WTC11 (cell line): ENCODE measurements at regions of chr16 and their contacts with region 1.

Region 1: GRCh38 chr16:75495076-75495674 is at the start of gene CHST6:
- DNase-seq: peak; percentile 82
- ATAC-seq: peak; percentile 85
- H3K4me3 Mint-ChIP-seq: peak within 1 kb of the TSS; percentile 93
- H3K27ac Mint-ChIP-seq: 0 out of 2 replicates have a peak within 1 kb of the TSS, but pooled peaks have one; percentile 76
- H3K4me1 Mint-ChIP-seq: peaks cover 19% of the 10 kb centered on the region
- H3K27me3 Mint-ChIP-seq: peaks cover 13% of the 10 kb centered on the region
- CTCF ChIP-seq: no peak
- total RNA-seq, gene CHST6: 20.2 to 23.2 TPM (median 23.1 TPM) in 3 replicates

Region 2: GRCh38 chr16:75064403-75065148 is 430.6 kb before region 1 on chr16:
- CTCF ChIA-PET with region 1: no interaction called
- POLR2A ChIA-PET with region 1: no interaction called
- DNase-seq: no peak
- ATAC-seq: no peak
- H3K4me3 Mint-ChIP-seq: no peak overlapping the region
- H3K27ac Mint-ChIP-seq: peak overlapping the region; percentile 86; the same call in 1 of the 2 replicates
- H3K4me1 Mint-ChIP-seq: peaks cover 34% of the 10 kb centered on the region
- H3K27me3 Mint-ChIP-seq: no peaks in the 10 kb centered on the region
- CTCF ChIP-seq: no peak

Region 3: DNA sequence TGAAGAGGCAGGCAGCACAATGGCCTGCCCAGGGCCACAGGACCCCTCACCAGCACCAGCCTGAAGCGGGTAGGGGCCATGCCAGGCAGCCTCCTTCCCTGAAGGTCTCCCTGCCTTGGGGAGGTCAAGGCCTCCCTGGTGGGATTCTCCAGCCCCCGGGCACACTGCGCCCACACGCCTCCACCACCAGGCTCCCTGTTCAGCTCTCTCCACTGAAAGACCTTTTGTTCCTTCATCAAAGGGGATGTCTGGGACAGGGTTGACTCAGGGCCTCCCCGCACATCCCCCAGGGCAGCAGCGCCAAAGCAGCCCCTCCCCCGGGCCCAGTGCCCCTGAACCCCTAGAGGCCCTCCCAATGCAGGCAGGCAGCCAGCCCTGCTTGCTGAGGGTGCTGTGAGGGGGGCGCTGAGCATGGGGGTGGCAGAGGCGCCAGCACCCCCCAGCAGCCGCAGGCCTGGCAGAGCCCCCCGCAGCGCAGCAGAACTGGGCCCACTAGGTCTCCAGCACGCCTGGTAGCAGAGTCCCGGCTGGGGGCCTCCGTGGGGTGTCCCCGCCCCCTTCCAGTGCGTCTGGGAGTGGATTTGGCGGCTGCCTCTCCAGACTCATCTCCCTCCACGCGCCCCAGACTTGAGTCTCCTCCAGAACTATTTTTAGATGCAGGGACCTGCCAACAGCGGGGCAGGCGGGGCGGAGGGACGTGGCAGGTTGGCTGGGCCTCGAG is 256.9 kb before region 1 on chr16:
- CTCF ChIA-PET with region 1: no interaction called
- POLR2A ChIA-PET with region 1: no interaction called
- DNase-seq: peak; percentile 15
- ATAC-seq: no peak
- H3K4me3 Mint-ChIP-seq: no peak overlapping the region
- H3K27ac Mint-ChIP-seq: no peak overlapping the region
- H3K4me1 Mint-ChIP-seq: peaks cover 19% of the 10 kb centered on the region
- H3K27me3 Mint-ChIP-seq: no peaks in the 10 kb centered on the region
- CTCF ChIP-seq: no peak

Region 4: GRCh38 chr16:75471723-75472633 is 23.2 kb before region 1 on chr16:
- CTCF ChIA-PET with region 1: interaction called, 23 read pairs
- POLR2A ChIA-PET with region 1: interaction called, 3 read pairs
- DNase-seq: peak; percentile 48
- ATAC-seq: peak; percentile 84
- H3K4me3 Mint-ChIP-seq: peak overlapping the region; percentile 37
- H3K27ac Mint-ChIP-seq: peak overlapping the region; percentile 84
- H3K4me1 Mint-ChIP-seq: peaks cover 23% of the 10 kb centered on the region
- H3K27me3 Mint-ChIP-seq: no peaks in the 10 kb centered on the region
- CTCF ChIP-seq: peak; percentile 50; the same call in 1 of the 2 replicates

Region 5: GRCh38 chr16:75647492-75648264 is 152.5 kb after region 1 on chr16 and contains the starts of genes KARS1 and TERF2IP:
- CTCF ChIA-PET with region 1: no interaction called
- POLR2A ChIA-PET with region 1: interaction called, 10 read pairs
- DNase-seq: peak; percentile 92
- ATAC-seq: peak; percentile 94
- H3K4me3 Mint-ChIP-seq: peak within 1 kb of the TSS; percentile 99
- H3K27ac Mint-ChIP-seq: peak within 1 kb of the TSS; percentile 99
- H3K4me1 Mint-ChIP-seq: peaks cover 33% of the 10 kb centered on the region
- H3K27me3 Mint-ChIP-seq: no peaks in the 10 kb centered on the region
- CTCF ChIP-seq: no peak
- total RNA-seq, gene KARS1: 163 to 199 TPM (median 169 TPM) in 3 replicates
- total RNA-seq, gene TERF2IP: 14.7 to 15.2 TPM (median 14.7 TPM) in 3 replicates